ENCODE measurements at regions of chr13 and their contacts with region 1.

Region 1: GRCh38 chr13:40477623-40478608 is 188.5 kb downstream of the FOXO1 start:
- DNase-seq: peak; percentile 75
- ATAC-seq: peak; percentile 63 to 72

Region 2: GRCh38 chr13:40406405-40407180 is 71.3 kb before region 1 on chr13:
- intact Hi-C with region 1: loop called in 1 of 2 experiments (anchors 5 kb)
- DNase-seq: no peak
- ATAC-seq: peak in 1 of 2 donors; percentile 51